Activated CD4-positive, alpha-beta T cell treated with anti-CD3 and anti-CD28 coated beads for 36 hours (primary cell): ENCODE measurements at regions of chr4 and their contacts with region 1.

Region 1: DNA sequence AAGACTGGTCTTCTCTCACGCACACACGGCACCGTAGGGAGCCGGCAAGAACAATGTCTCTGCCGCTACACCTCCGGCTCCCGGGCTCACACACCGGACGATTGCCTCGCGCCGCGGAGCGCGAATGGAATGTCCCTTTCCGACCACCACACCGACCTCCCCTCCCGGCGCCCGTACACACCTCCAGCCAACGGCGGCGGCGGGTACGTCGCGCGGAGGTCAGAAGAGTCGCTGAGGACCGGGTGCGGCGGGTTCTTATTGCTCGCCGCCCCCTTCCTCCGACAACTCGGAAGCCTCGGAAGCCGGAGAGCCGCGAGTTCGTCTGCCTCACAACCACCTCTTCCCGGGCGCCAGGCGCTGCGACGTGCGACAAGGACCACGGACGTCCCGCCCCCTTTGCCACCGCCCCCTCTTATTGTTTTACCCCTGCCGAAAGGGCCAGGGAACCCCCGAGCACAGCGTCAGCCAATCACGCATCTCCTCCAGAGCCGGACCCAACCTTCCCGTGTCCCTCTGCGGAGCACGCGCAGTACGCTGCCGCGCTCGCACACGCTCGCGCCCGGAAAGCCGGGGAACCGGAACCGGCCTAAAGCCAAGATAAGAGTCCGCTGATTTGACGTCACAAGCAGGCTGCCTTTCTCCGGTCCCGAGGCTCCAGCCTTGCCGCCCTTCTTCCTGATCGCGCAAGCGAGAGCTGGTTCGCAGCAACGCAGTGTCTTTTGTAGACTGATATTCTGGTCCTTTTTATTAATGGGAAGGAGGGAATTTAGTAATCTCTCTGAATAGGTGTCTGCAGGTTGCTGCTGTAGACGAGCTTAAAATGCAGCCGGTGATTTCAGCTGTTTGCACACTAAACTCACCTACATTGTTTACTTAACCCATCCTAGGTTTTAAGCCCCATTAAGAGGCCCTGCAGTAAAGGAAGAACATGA is at the start of gene G3BP2:
- DNase-seq: peak; percentile 98
- ATAC-seq: peak; percentile 96
- H3K4me3 Mint-ChIP-seq: peak within 1 kb of the TSS; percentile 98
- H3K27ac Mint-ChIP-seq: peak within 1 kb of the TSS; percentile 96
- H3K4me1 Mint-ChIP-seq: peaks cover 39% of the 10 kb centered on the region
- H3K27me3 Mint-ChIP-seq: no peaks in the 10 kb centered on the region
- total RNA-seq, gene G3BP2: 127 to 137 TPM

Region 2: GRCh38 chr4:75630174-75630936 is 42.9 kb before region 1 on chr4 and contains the start of gene CDKL2:
- CTCF ChIA-PET with region 1: no interaction called
- POLR2A ChIA-PET with region 1: no interaction called
- intact Hi-C with region 1: loop called (anchors 1 to 2 kb)
- DNase-seq: peak; percentile 94
- ATAC-seq: peak; percentile 99
- H3K4me3 Mint-ChIP-seq: peak within 1 kb of the TSS; percentile 76
- H3K27ac Mint-ChIP-seq: peak within 1 kb of the TSS; percentile 27
- H3K4me1 Mint-ChIP-seq: peaks cover 8% of the 10 kb centered on the region
- H3K27me3 Mint-ChIP-seq: no peaks in the 10 kb centered on the region
- total RNA-seq, gene CDKL2: 0.62 to 0.91 TPM

Region 3: GRCh38 chr4:75686346-75686745 is 13.1 kb after region 1 on chr4:
- CTCF ChIA-PET with region 1: interaction called, 3 read pairs
- POLR2A ChIA-PET with region 1: interaction called, 3 read pairs
- intact Hi-C with region 1: loop called in 1 of 2 experiments (anchors 1 kb)
- DNase-seq: peak; percentile 20
- ATAC-seq: peak; percentile 73
- H3K4me3 Mint-ChIP-seq: no peak overlapping the region
- H3K27ac Mint-ChIP-seq: no peak overlapping the region
- H3K4me1 Mint-ChIP-seq: peaks cover 30% of the 10 kb centered on the region
- H3K27me3 Mint-ChIP-seq: no peaks in the 10 kb centered on the region

Region 4: DNA sequence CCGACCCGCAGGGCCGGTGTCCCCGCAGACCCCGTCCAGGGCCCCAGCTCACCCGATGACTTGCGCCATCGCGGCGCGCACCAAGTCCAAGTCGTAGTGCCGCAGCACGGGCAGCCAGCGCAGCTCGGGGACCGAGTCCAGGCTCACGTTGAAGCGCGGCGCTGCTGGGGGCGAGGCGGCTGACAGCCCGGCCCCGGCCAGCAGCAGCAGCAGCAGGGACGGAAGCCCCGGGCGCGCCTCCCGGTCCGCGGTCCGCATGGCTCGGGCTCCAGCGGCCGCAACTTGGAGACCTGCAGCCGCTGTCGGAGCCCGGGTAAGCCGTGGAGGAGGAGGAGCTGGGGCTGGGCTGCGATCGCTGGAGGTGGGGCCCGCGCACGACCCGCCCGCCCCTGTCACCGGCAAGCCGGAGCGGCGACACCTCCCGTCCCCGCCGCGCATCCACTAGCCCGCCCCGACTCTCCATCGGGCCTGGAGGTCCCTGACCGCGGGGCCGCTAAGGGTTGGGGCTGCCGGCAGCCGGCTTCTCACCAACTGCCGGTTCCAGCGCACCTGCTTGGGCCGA is 267.5 kb after region 1 on chr4 and contains the start of gene NAAA:
- CTCF ChIA-PET with region 1: no interaction called
- POLR2A ChIA-PET with region 1: no interaction called
- intact Hi-C with region 1: loop called in 1 of 2 experiments (anchors 1 kb)
- DNase-seq: peak; percentile 87
- ATAC-seq: peak; percentile 85
- H3K4me3 Mint-ChIP-seq: peak within 1 kb of the TSS; percentile 97
- H3K27ac Mint-ChIP-seq: peak within 1 kb of the TSS; percentile 97
- H3K4me1 Mint-ChIP-seq: peaks cover 7% of the 10 kb centered on the region
- H3K27me3 Mint-ChIP-seq: no peaks in the 10 kb centered on the region
- total RNA-seq, gene NAAA: 21.2 to 26.8 TPM

Region 5: GRCh38 chr4:76148142-76148865 is 475.0 kb after region 1 on chr4 and contains the start of gene NUP54:
- CTCF ChIA-PET with region 1: no interaction called
- POLR2A ChIA-PET with region 1: no interaction called
- intact Hi-C with region 1: loop called (anchors 1 to 2 kb)
- DNase-seq: peak; percentile 97
- ATAC-seq: peak; percentile 97
- H3K4me3 Mint-ChIP-seq: peak within 1 kb of the TSS; percentile 86
- H3K27ac Mint-ChIP-seq: peak within 1 kb of the TSS; percentile 89
- H3K4me1 Mint-ChIP-seq: peaks cover 25% of the 10 kb centered on the region
- H3K27me3 Mint-ChIP-seq: no peaks in the 10 kb centered on the region
- total RNA-seq, gene NUP54: 58.2 to 67.3 TPM

Region 6: GRCh38 chr4:76377911-76378310 is 704.6 kb after region 1 on chr4:
- CTCF ChIA-PET with region 1: no interaction called
- POLR2A ChIA-PET with region 1: no interaction called
- intact Hi-C with region 1: no loop called
- DNase-seq: peak; percentile 74
- ATAC-seq: peak; percentile 30
- H3K4me3 Mint-ChIP-seq: no peak overlapping the region
- H3K27ac Mint-ChIP-seq: no peak overlapping the region
- H3K4me1 Mint-ChIP-seq: no peaks in the 10 kb centered on the region
- H3K27me3 Mint-ChIP-seq: no peaks in the 10 kb centered on the region